Common myeloid progenitor, CD34-positive (primary cell): ENCODE measurements at regions of chr1 and their contacts with region 1.

Region 1: GRCh38 chr1:100459358-100460114 is 78.4 kb upstream of the GPR88 start:
- DNase-seq: peak; percentile 82 to 88 (median 83)
- H3K4me3 ChIP-seq: no peak overlapping the region
- H3K27ac ChIP-seq: no peak overlapping the region
- H3K4me1 ChIP-seq: peaks cover 3 to 21% (median 14%) of the 10 kb centered on the region in 4 experiments
- H3K27me3 ChIP-seq: no peaks in the 10 kb centered on the region

Region 2: DNA sequence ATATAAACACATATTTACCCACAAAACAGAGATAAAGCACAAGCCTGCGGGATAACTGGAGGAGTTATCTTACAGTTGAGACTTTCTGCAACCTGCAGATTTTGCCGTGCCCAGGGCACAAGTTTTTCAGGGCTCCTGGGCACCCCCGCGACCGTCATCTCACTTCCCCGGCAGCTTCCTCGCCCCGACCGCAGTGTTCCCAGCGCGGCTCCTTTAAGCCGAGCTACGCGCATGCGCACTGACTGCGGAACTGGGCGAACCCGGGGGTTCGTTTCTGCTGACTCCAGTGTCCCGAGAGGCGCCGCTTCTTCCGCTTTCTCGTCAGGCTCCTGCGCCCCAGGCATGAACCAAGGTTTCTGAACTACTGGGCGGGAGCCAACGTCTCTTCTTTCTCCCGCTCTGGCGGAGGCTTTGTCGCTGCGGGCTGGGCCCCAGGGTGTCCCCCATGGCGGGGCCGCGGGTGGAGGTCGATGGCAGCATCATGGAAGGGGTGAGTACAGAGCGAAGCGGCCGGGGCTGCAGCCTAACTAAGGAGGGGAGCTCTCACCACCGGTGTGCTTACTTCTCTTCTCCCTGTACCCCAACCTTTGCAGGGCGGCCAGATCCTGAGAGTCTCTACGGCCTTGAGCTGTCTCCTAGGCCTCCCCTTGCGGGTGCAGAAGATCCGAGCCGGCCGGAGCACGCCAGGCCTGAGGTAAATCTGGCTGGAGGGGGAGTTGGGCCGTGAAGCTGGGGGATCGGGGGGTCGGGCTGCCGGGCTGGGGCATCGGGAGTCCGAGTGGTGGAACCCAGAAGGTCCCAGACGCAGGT is 193.4 kb before region 1 on chr1 and contains the start of gene RTCA:
- CTCF ChIA-PET with region 1: interaction called, 15 read pairs
- POLR2A ChIA-PET with region 1: no interaction called
- DNase-seq: peak; percentile 97 to 99 (median 98)
- H3K4me3 ChIP-seq: peak within 1 kb of the TSS; percentile 68 to 96 (median 92)
- H3K27ac ChIP-seq: peak within 1 kb of the TSS; percentile 81 to 93
- H3K4me1 ChIP-seq: peaks cover 12 to 24% (median 14%) of the 10 kb centered on the region in 4 experiments
- H3K27me3 ChIP-seq: no peaks in the 10 kb centered on the region

Region 3: GRCh38 chr1:100290291-100290690 is 169.2 kb before region 1 on chr1:
- CTCF ChIA-PET with region 1: interaction called, 10 read pairs
- POLR2A ChIA-PET with region 1: no interaction called
- DNase-seq: no peak
- H3K4me3 ChIP-seq: no peak overlapping the region
- H3K27ac ChIP-seq: peak overlapping the region in 1 of 2 experiments; percentile 11
- H3K4me1 ChIP-seq: peaks cover 0 to 16% (median 6%) of the 10 kb centered on the region in 4 experiments
- H3K27me3 ChIP-seq: no peaks in the 10 kb centered on the region

Region 4: DNA sequence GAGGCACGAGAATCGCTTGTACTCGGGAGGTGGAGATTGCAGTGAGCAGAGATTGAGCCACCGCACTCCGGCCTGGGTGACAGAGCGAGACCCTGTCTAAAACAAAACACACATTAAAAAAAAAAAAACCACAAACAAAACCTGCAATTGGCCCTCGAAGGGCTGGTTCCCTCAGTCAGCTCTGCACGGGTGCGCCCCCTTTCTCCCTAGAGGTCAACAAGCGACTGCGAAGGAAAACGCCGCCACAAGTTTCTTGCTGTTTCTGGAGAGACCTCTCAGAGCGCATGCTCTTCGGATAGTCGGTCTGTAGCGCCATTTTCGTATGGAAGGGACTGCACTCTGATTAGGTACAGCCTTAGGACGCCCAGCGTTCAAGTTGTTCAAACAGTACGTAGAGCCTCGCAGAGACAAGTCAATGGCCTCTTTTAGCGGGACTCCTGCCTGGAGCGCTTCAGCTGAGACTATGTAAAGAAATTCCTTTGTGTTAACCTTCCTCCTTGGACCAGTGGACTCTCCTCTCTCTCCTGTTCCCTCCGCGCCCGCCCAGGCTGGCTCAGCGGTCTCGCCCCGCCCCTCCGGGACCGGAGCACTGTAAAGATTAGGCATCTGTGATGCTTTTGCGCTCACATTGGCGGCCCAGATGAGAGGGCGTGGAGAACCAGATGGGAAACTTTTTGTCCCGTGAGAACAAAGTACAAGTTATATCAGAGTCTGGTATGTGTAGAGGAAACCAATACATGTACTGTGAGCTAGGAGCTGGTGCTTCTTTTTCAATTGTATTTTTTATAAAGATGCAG is 108.2 kb before region 1 on chr1:
- CTCF ChIA-PET with region 1: interaction called, 12 read pairs
- POLR2A ChIA-PET with region 1: no interaction called
- DNase-seq: peak; percentile 97 to 98 (median 98)
- H3K4me3 ChIP-seq: peak overlapping the region; percentile 90 to 99 (median 98)
- H3K27ac ChIP-seq: peak overlapping the region; percentile 85 to 94
- H3K4me1 ChIP-seq: peaks cover 17 to 68% (median 33%) of the 10 kb centered on the region in 4 experiments
- H3K27me3 ChIP-seq: no peaks in the 10 kb centered on the region

Region 5: DNA sequence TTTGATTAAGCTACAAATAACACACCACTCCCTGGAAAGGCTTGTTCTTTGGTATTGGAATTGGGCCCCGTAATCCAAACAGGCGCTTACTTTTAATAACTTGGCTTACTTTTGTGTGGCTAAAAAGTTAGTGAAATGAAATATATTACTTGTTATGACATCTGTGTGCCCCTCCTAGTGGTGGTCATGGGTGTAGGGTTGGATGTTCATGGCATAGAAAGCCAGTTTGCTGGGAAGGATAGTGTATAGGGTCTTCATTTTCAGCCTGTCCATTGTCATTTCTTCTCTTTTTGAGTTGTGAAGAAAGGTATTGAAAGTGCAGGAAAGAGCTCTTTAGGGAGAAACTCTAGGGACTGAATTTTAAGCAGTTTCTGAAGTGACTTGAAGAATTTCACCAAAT is 101.3 kb before region 1 on chr1:
- CTCF ChIA-PET with region 1: interaction called, 20 read pairs
- POLR2A ChIA-PET with region 1: no interaction called
- DNase-seq: peak; percentile 43 to 66 (median 63)
- H3K4me3 ChIP-seq: no peak overlapping the region
- H3K27ac ChIP-seq: no peak overlapping the region
- H3K4me1 ChIP-seq: peaks cover 35 to 69% (median 46%) of the 10 kb centered on the region in 4 experiments
- H3K27me3 ChIP-seq: no peaks in the 10 kb centered on the region

Region 6: DNA sequence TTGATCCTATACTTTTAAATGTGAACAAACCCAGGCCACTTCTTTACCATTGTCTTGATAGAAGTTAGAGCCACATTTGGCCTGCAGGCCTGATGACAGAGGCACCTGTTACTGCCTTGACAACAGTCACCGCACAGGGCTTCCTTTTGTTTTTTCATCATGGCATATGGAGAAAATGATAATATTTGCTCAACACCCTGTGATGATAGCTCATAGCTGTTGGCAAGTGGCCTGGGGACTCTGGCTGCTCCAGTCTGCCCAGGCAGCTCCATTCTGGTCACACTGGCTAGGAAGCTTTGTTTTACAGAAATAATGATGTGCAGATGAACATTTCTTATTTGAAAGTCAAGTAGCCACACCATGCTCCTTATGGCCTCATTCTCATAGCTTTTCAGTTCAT is 11.2 kb before region 1 on chr1:
- CTCF ChIA-PET with region 1: interaction called, 15 read pairs
- POLR2A ChIA-PET with region 1: no interaction called
- DNase-seq: peak in 2 of 3 donors; percentile 51 to 70
- H3K4me3 ChIP-seq: no peak overlapping the region
- H3K27ac ChIP-seq: no peak overlapping the region
- H3K4me1 ChIP-seq: peaks cover 9 to 31% (median 22%) of the 10 kb centered on the region in 4 experiments
- H3K27me3 ChIP-seq: no peaks in the 10 kb centered on the region

Region 7: GRCh38 chr1:100575406-100575805 is 115.9 kb after region 1 on chr1:
- CTCF ChIA-PET with region 1: no interaction called
- POLR2A ChIA-PET with region 1: no interaction called
- DNase-seq: peak; percentile 4 to 38 (median 14)
- H3K4me3 ChIP-seq: no peak overlapping the region
- H3K27ac ChIP-seq: no peak overlapping the region
- H3K4me1 ChIP-seq: no peaks in the 10 kb centered on the region
- H3K27me3 ChIP-seq: no peaks in the 10 kb centered on the region

Region 8: DNA sequence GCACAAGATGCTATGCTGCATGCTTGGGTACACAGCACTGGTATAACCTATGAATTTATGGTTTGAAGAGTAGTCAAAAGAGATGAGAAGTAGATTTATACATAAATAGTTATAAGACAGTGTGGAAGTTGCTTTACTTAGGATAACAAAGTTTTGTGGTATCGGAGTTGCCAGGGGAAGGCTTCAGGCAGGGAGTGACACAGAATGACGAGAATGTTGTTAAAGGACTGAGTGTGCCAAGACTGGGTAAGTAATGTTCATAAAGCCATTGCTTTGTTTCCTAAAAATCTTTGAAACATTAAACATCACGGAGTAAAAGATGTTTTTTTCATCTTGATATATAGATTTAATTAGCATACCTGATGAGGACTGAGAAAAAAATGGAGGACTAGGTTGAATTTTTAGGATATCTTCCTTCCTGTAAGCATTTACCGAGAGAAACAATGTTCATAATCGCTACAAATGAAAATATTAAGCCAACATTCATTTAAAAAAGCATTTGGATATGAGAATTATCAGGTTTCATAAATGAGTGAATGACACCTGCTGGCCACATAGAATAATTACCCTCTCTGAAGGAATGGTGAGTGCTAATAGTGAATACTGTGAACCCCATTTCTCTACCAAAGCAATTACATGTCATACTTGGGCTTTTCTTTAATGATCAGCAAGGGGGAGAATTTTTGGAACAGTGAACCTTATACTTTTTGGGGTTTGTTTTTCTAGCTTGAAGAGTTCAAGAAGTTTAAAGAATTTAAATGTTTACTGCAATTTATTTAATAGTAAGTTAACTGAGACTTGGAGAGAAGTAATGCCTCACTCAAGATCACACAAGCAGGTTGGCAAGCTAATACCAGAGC is 406.7 kb after region 1 on chr1:
- CTCF ChIA-PET with region 1: interaction called, 71 read pairs
- POLR2A ChIA-PET with region 1: no interaction called
- DNase-seq: peak; percentile 47 to 70 (median 67)
- H3K4me3 ChIP-seq: peak overlapping the region in 1 of 7 experiments; percentile 17
- H3K27ac ChIP-seq: no peak overlapping the region
- H3K4me1 ChIP-seq: peaks cover 0 to 9% (median 3%) of the 10 kb centered on the region in 4 experiments
- H3K27me3 ChIP-seq: no peaks in the 10 kb centered on the region